CD8-positive, alpha-beta T cell (primary cell): ENCODE measurements at regions of chr6 and their contacts with region 1.

Region 1: DNA sequence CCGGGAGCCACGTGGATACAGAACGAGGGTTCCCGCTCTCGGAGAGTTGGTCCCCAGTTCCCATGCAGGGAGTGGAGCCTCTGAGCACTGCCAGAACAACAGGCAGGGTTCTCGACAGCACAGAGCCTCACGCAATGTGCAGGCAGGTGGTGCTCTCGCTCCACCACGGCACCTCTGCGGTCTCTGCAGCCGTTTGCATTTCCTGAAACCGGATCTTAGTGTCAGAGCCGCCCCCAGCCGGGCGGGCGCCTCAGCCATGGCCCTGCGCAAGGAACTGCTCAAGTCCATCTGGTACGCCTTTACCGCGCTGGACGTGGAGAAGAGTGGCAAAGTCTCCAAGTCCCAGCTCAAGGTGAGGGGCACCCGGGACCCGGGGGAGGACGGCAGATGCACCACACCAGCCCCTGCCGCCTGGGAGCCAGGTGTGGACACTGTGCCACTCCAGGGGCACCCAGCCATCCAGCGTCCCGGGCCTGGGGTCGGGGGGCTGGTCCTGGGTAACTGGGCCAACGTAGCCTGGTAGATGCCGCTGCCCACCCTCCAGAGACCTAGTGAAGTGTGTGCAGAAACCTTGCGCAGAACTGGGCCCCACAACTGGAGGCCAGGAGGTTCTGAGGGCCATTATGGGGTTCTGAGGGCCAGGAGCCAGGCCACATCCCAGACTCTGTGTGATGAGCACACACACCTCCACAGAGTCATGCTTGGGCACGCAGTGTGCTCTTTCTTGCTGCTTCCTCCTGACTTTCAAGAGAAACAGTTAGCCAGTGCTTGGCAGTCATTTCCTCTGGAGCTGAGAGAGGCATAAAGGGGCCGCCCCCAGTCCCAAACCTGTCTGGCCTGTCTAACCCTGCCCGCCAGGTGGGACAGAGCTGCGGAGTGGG is at the start of gene DEF6:
- DNase-seq: peak; percentile 82 to 94 (median 88)
- ATAC-seq: peak; percentile 71
- H3K4me3 ChIP-seq: peak within 1 kb of the TSS; percentile 91 to 99
- H3K4me3 Mint-ChIP-seq: peak within 1 kb of the TSS; percentile 86
- H3K27ac ChIP-seq: peak within 1 kb of the TSS; percentile 81 to 89
- H3K27ac Mint-ChIP-seq: peak within 1 kb of the TSS; percentile 98
- H3K4me1 ChIP-seq: peaks cover 48% of the 10 kb centered on the region
- H3K4me1 Mint-ChIP-seq: peaks cover 51% of the 10 kb centered on the region
- H3K27me3 ChIP-seq: no peaks in the 10 kb centered on the region
- H3K27me3 Mint-ChIP-seq: no peaks in the 10 kb centered on the region
- CTCF ChIP-seq: peak; percentile 90
- total RNA-seq, gene DEF6: 172 to 182 TPM

Region 2: DNA sequence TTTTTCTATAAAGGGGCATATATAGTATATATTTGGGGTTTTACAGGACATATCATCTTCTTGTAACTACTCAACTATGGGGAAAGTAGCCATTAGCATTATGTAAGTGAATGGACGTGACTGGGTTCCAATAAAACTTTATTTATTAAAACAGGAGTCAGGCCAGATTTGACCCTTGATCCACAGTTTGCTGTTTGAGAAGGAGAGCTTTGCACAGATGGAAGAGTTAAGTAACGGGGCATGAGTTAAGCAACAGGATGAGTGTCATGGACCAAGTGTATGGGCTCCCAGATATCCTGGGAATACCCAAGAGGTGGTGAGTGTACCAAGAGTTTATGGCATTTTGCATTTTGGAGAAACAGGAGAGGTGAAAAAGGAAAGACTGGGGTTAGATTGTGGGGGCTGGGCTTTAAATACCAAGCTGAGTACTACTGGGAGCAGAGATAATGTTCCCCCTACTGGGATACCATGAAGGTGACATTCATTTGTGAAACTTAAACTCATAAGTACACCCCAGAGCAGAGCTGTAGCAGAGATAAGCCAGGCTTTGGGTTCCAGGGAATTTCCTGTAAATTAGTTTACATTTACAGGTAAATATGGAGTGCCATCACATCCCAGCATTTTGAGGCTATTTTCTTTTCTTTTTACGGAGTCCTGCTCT is 102.6 kb before region 1 on chr6:
- CTCF ChIA-PET with region 1: no interaction called
- POLR2A ChIA-PET with region 1: no interaction called
- intact Hi-C with region 1: no loop called
- DNase-seq: no peak
- ATAC-seq: no peak
- H3K4me3 ChIP-seq: no peak overlapping the region
- H3K4me3 Mint-ChIP-seq: no peak overlapping the region
- H3K27ac ChIP-seq: no peak overlapping the region
- H3K27ac Mint-ChIP-seq: no peak overlapping the region
- H3K4me1 ChIP-seq: no peaks in the 10 kb centered on the region
- H3K4me1 Mint-ChIP-seq: peaks cover 7% of the 10 kb centered on the region
- H3K27me3 ChIP-seq: peaks cover 0 to 1% of the 10 kb centered on the region in 2 experiments
- H3K27me3 Mint-ChIP-seq: peaks cover 20% of the 10 kb centered on the region
- CTCF ChIP-seq: no peak

Region 3: GRCh38 chr6:35259194-35259947 is 38.5 kb before region 1 on chr6 and contains the start of gene ZNF76:
- CTCF ChIA-PET with region 1: interaction called, 6 read pairs
- POLR2A ChIA-PET with region 1: interaction called, 3 read pairs
- intact Hi-C with region 1: loop called in 1 of 2 experiments (anchors 2 kb)
- DNase-seq: peak; percentile 86 to 97 (median 93)
- ATAC-seq: peak; percentile 73
- H3K4me3 ChIP-seq: peak within 1 kb of the TSS; percentile 75 to 95
- H3K4me3 Mint-ChIP-seq: peak within 1 kb of the TSS; percentile 97
- H3K27ac ChIP-seq: peak within 1 kb of the TSS; percentile 88 to 96
- H3K27ac Mint-ChIP-seq: peak within 1 kb of the TSS; percentile 99
- H3K4me1 ChIP-seq: peaks cover 42% of the 10 kb centered on the region
- H3K4me1 Mint-ChIP-seq: peaks cover 55% of the 10 kb centered on the region
- H3K27me3 ChIP-seq: no peaks in the 10 kb centered on the region
- H3K27me3 Mint-ChIP-seq: no peaks in the 10 kb centered on the region
- CTCF ChIP-seq: no peak
- total RNA-seq, gene ZNF76: 54.6 to 57.8 TPM

Region 4: GRCh38 chr6:35311390-35312075 is 13.7 kb after region 1 on chr6:
- CTCF ChIA-PET with region 1: interaction called, 545 read pairs
- POLR2A ChIA-PET with region 1: interaction called, 15 read pairs
- intact Hi-C with region 1: loop called in 1 of 2 experiments (anchors 1 kb)
- DNase-seq: peak; percentile 19 to 84 (median 64)
- ATAC-seq: peak; percentile 72
- H3K4me3 ChIP-seq: peak overlapping the region; percentile 29 to 42
- H3K4me3 Mint-ChIP-seq: peak overlapping the region; percentile 82
- H3K27ac ChIP-seq: peak overlapping the region; percentile 75 to 85
- H3K27ac Mint-ChIP-seq: peak overlapping the region; percentile 100
- H3K4me1 ChIP-seq: peaks cover 91% of the 10 kb centered on the region
- H3K4me1 Mint-ChIP-seq: peaks cover 88% of the 10 kb centered on the region
- H3K27me3 ChIP-seq: no peaks in the 10 kb centered on the region
- H3K27me3 Mint-ChIP-seq: no peaks in the 10 kb centered on the region
- CTCF ChIP-seq: no peak

Region 5: GRCh38 chr6:35327349-35328027 is 29.6 kb after region 1 on chr6:
- CTCF ChIA-PET with region 1: interaction called, 545 read pairs
- POLR2A ChIA-PET with region 1: interaction called, 16 read pairs
- intact Hi-C with region 1: loop called (anchors 1 kb)
- DNase-seq: peak; percentile 61 to 86 (median 82)
- ATAC-seq: peak; percentile 81
- H3K4me3 ChIP-seq: no peak overlapping the region
- H3K4me3 Mint-ChIP-seq: peak overlapping the region; percentile 42
- H3K27ac ChIP-seq: peak overlapping the region in 1 of 2 experiments; percentile 62
- H3K27ac Mint-ChIP-seq: peak overlapping the region; percentile 88
- H3K4me1 ChIP-seq: peaks cover 19% of the 10 kb centered on the region
- H3K4me1 Mint-ChIP-seq: peaks cover 21% of the 10 kb centered on the region
- H3K27me3 ChIP-seq: no peaks in the 10 kb centered on the region
- H3K27me3 Mint-ChIP-seq: no peaks in the 10 kb centered on the region
- CTCF ChIP-seq: peak; percentile 68

Region 6: GRCh38 chr6:35452186-35453090 is 154.6 kb after region 1 on chr6 and contains the start of gene FANCE:
- CTCF ChIA-PET with region 1: interaction called, 137 read pairs
- POLR2A ChIA-PET with region 1: interaction called, 4 read pairs
- intact Hi-C with region 1: loop called (anchors 1 kb)
- DNase-seq: peak; percentile 62 to 91 (median 90)
- ATAC-seq: peak; percentile 81
- H3K4me3 ChIP-seq: peak within 1 kb of the TSS; percentile 64 to 86
- H3K4me3 Mint-ChIP-seq: peak within 1 kb of the TSS; percentile 85
- H3K27ac ChIP-seq: peak within 1 kb of the TSS; percentile 28 to 47
- H3K27ac Mint-ChIP-seq: peak within 1 kb of the TSS; percentile 77
- H3K4me1 ChIP-seq: peaks cover 25% of the 10 kb centered on the region
- H3K4me1 Mint-ChIP-seq: peaks cover 22% of the 10 kb centered on the region
- H3K27me3 ChIP-seq: no peaks in the 10 kb centered on the region
- H3K27me3 Mint-ChIP-seq: no peaks in the 10 kb centered on the region
- CTCF ChIP-seq: no peak
- total RNA-seq, gene FANCE: 1.1 to 1.2 TPM

Region 7: GRCh38 chr6:35552285-35552917 is 254.6 kb after region 1 on chr6:
- CTCF ChIA-PET with region 1: interaction called, 23 read pairs
- POLR2A ChIA-PET with region 1: no interaction called
- intact Hi-C with region 1: loop called (anchors 1 kb)
- DNase-seq: peak; percentile 31 to 78 (median 61)
- ATAC-seq: peak; percentile 86
- H3K4me3 ChIP-seq: no peak overlapping the region
- H3K4me3 Mint-ChIP-seq: no peak overlapping the region
- H3K27ac ChIP-seq: no peak overlapping the region
- H3K27ac Mint-ChIP-seq: no peak overlapping the region
- H3K4me1 ChIP-seq: no peaks in the 10 kb centered on the region
- H3K4me1 Mint-ChIP-seq: peaks cover 4% of the 10 kb centered on the region
- H3K27me3 ChIP-seq: no peaks in the 10 kb centered on the region
- H3K27me3 Mint-ChIP-seq: peaks cover 2% of the 10 kb centered on the region
- CTCF ChIP-seq: peak; percentile 95

Region 8: DNA sequence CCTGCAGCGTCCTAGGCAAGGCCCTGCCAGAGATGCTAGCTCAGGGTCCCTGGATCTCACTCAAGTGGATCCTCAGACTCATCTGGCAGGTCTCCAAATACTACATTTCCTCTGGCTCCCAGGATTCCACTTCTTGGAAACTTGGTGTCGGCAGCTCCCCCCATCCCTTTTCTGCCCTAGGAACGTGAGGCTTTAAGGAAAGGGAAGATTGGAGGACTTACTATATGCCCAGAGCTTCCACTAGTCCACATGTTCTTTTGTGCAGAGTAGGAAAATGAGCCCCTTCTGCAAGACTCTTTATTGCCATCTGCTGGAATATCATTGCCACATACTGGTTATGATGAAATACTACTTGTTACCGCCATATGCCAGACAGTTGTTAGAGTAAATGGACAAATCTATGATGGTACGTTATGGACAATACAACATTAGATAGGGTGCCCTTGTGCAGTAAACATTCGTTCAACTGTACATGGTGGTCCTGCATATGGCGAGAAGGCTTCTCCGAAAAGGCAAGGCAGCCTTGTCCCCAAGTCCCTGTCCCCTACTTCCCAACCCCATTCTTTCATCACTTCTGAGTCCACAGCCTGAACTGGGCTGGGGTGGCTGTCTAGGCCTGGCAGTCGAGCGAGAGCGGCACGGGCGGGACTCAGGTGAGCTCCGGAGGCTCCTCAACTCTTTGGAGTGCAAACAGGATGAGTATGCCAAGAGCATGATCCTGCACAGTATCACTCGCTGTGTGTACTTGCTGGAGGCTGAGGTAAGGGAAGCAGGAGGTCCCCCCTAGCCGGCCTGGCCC is 439.8 kb after region 1 on chr6:
- CTCF ChIA-PET with region 1: interaction called, 10 read pairs
- POLR2A ChIA-PET with region 1: no interaction called
- intact Hi-C with region 1: loop called (anchors 1 kb)
- DNase-seq: peak in 4 of 9 experiments; percentile 22 to 83 (median 68)
- ATAC-seq: peak; percentile 72
- H3K4me3 ChIP-seq: no peak overlapping the region
- H3K4me3 Mint-ChIP-seq: no peak overlapping the region
- H3K27ac ChIP-seq: no peak overlapping the region
- H3K27ac Mint-ChIP-seq: peak overlapping the region; percentile 66
- H3K4me1 ChIP-seq: peaks cover 48% of the 10 kb centered on the region
- H3K4me1 Mint-ChIP-seq: peaks cover 42% of the 10 kb centered on the region
- H3K27me3 ChIP-seq: no peaks in the 10 kb centered on the region
- H3K27me3 Mint-ChIP-seq: peaks cover 1% of the 10 kb centered on the region
- CTCF ChIP-seq: peak; percentile 77